ENCODE measurements at regions of chr17 and their contacts with region 1.

Region 1: GRCh38 chr17:66420961-66421371 is 118.6 kb downstream of the PRKCA start:
- DNase-seq: peak in 1 of 2 experiments; percentile 53
- H3K4me3 ChIP-seq: no peak overlapping the region
- H3K4me3 Mint-ChIP-seq: no peak overlapping the region
- H3K27ac Mint-ChIP-seq: peak overlapping the region; percentile 69
- H3K4me1 ChIP-seq: peaks cover 49% of the 10 kb centered on the region
- H3K4me1 Mint-ChIP-seq: peaks cover 37% of the 10 kb centered on the region
- H3K27me3 ChIP-seq: no peaks in the 10 kb centered on the region
- H3K27me3 Mint-ChIP-seq: no peaks in the 10 kb centered on the region
- CTCF ChIP-seq: no peak

Region 2: DNA sequence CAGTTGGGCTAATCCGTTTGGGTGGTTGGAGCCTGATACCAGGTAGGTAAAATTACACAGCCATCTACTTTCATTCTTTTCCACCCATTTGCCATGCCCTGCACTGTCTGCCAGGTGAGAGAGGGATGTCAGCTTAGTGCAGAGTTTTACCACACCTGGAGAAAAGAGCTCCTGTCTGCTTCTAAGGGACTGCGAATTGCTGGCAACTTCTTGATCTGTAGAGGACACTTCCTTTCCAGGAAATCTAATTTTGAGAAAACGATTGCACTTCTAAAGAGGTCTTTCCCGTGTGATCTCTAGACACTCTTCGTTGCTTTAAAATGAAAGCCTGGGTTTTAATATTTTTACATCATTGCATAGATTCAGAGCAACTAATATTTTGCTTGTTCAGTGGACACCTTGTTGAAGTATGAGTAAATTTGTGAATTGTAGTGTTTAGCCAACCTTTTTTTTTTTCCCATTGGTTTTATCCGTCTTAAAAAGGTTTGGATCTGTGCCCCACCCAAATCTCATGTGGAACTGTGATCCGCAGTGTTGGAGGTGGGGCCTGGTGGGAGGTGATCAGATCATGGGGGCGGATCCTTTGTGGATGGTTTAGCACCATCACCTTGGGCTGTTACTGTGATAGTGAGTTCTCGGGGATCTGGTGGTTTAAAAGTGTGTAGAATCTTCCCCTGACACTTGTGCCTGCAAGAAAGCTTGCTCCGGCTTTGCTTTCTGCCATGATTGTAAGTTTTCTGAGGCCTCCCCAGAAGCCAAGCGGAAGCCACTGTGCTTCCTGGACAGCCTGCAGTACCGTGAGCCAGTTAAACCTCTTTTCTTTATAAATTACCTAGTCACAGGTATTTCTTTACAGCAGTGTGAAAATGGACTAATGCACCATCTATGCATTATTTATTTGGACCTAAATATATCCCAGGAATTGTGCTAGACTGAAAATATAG is 14.0 kb before region 1 on chr17:
- CTCF ChIA-PET with region 1: no interaction called
- POLR2A ChIA-PET with region 1: interaction called, 17 read pairs
- intact Hi-C with region 1: no loop called
- DNase-seq: no peak
- H3K4me3 ChIP-seq: no peak overlapping the region
- H3K4me3 Mint-ChIP-seq: no peak overlapping the region
- H3K27ac Mint-ChIP-seq: no peak overlapping the region
- H3K4me1 ChIP-seq: peaks cover 8% of the 10 kb centered on the region; the same call in 1 of the 2 replicates
- H3K4me1 Mint-ChIP-seq: no peaks in the 10 kb centered on the region
- H3K27me3 ChIP-seq: no peaks in the 10 kb centered on the region
- H3K27me3 Mint-ChIP-seq: no peaks in the 10 kb centered on the region
- CTCF ChIP-seq: no peak

Measured in Caco-2 (cell line).